Cardiac septum (tissue), 1 donor: ENCODE measurements at regions of chr13 and their contacts with region 1.

Region 1: DNA sequence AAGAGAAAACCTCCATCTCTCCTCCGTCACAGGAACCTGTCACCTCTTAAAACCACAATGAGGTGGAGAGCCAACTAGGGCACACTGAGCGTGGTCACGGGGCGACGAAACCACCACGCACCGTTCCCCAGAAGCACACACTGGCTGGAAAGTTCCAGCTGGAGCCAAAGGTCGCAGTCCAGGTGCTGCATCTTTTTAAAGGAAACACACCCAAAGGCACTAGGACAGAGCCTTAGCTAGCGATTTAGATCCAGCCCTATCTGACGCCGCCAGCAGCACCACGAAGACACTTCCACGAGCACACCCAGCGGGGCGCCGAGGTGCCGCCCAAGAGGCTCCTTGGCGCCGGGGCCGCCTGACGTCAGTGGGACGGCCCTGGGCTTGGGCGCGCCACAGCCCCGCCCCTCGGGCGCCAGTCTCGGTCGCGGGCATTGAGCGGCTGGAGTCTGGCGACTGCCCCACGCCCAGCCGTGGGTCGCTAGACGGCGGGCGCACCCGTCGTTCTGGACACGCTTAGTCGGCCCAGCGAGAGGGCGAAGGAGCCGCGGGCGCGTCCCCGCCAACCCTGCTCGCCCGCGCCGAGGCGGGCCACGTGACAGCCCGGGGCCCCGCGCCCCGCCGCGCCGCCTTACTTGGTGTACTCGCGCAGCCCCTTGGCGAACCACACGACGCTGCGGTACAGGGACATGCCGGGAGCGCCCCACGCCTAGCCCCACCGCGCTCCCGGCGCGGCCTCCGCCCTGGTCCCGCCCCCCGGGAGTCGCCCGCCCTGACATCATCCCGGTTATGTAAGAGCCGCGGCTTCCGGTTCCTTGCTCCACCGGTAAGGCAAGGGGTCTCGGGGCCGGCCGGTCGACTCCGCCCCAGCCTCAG is at the start of gene DHRS12:
- DNase-seq: peak; percentile 98
- total RNA-seq, gene DHRS12: 9.8 TPM

Region 2: DNA sequence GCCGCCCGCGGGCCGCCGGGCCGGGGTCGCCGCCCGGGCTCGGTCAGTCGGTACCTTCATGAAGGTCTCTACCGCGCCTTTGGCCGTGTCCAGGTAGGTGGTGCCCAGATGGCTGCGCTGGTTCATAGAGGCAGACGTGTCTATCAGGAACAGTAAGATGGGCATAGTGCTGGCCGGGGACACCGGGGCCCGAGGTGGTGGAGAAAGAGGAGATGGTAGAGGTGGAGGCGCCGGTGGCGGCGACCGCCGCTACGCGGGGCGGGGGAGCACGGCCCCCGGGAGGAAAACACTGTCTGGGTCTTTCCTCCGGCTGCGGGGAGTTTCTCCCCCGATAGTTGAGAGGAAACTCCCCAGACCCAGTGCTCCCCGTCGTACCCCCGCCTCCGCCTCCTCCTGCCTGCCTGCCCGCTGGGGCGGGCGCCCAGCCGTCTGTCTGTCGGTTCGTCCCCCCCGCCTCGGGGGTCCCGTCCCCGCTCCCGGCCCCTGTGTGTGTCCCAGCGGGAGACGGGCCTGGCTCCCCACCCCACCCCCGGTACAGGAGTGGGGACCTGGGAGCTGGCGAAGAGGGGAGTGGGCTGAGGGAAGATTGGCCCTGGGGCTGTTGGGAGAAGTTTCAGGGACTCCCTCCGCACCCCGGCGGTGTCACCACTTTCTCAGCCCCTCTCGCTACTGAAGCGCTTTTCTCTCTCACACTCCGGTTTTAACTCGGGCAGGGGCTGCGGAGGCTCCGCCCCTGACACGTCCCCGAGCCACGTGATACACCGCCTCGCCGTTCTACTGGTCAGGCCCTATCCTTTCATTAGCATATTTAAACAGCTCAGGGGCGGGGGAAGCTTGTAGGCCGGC is 351.1 kb before region 1 on chr13 and contains the start of gene INTS6:
- intact Hi-C with region 1: loop called (anchors 5 kb)
- DNase-seq: peak; percentile 100
- total RNA-seq, gene INTS6: 32.9 TPM

Region 3: DNA sequence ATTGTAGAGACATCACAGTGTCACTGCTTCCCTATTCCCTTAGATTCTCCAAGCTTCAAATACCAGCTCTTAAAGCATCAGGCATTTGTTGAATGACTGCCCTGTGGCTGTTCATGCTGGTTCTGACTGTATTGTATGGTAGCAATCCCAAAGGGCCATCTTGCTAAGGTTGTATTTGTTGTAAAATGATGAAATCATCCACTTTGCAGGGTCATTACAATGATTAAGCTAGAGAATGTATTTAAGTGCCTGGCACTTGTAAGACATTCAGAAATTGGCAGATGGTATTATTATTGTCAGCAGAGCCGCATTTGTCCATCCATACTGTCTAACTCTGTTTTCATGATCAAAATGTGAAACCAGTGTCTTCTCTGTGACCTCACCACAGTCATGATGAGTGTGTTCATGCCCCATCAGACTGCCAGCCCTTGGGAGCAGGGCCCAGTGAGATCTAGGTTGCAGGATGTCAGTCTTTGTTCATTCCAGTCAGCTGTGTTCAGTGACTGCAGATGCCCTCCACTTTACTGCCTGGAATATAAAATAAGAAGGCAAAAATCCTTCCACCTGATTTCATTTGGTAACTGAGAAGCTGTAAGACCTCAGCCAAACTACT is 85.8 kb before region 1 on chr13:
- intact Hi-C with region 1: no loop called
- DNase-seq: no peak

Region 4: DNA sequence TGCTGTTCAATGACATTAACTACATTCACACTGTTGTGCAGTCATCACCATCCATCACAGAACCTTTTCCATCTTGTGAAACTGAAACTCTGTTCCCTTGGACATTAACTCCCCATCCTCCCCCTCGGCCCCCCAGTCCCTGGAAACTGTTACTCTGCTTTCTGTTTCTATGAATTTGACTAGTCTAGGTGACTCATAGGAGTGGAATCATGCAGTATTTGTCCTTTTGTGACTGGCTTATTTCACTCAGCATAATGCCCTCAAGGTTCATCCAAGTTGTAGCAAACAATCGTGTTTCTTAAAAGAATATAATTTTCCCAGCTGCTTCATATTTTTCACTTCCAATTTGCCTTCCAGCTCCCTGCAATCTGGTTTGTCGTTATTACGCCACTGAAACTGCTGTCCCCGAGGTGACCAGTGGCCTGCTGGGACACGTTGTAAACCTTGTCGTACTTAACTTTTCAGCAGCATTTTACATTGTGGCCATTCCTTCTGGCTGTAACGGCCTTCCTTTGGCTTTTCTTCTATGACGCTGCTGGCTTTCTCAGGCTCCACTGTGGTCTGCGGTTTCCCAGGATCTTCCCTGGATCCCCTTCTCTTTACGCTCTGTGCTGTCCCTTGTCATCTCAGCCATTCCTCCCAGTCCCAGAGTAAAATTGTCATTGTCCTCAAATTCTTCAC is 73.7 kb before region 1 on chr13:
- intact Hi-C with region 1: loop called (anchors 5 kb)
- DNase-seq: no peak

Region 5: DNA sequence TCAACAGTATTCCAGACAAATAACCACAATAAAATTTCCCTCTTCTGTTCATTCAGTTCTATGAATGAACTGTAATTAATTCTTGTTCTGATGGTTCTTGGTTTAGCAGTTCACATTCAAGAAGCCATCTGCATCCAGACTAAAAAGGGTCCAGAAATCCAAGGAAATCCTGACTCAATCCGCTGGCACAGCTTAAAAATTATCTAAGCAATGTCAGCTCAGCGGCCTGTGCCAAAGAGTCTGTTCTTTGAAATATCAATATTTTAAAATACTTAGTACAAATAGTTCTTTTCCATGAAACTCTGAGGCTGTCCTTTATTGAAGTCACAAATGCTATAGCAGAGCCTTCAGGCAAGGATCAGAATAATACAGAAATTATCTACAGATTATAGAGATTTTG is 56.9 kb before region 1 on chr13:
- intact Hi-C with region 1: no loop called
- DNase-seq: no peak

Region 6: DNA sequence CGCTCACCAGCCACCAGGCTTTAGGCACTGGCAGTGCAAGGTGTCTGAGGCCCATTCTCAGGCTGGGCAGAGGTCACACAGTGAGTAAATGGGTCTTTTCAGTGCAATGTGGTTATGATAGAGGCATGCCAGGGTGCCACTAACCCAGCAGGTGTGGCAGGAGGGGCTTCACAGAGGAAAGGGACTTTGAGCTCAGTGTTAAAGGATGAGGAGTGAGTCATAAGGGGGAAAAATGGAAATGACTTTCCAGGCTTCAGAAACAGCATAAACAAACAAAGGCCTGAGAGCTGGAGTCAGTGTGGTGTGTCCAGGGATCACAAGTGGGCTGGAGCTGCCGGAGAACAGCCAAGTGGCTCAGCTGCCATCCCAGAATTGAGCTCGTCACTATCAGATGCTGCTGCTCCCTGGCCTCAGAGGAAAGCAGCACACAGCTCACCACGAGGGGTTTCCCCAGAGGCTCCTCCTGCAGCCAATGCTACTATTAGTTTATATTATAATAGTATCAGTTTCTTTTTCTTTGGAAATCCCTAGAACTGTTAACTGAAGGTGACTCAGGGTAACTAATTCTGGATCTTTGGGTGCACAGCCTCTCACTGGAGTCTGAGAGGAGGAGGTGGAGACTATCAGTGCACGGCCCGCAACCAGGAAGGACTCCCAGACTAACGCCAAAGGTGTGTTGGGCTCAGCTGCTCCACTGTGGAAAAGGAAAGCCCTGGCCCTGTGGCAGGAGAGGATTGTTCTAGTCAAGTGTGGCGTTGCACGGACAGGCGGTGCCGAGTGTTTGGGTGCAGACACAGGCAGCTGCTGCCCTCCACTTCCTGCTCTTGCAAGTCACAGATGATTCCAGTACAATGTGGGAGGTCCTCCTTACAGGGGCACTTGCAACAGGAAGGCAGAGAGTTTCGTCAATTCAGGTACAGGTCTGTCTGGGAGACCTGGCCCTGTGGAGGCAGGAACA is 39.2 kb before region 1 on chr13:
- intact Hi-C with region 1: loop called (anchors 5 kb)
- DNase-seq: peak; percentile 84

Region 7: DNA sequence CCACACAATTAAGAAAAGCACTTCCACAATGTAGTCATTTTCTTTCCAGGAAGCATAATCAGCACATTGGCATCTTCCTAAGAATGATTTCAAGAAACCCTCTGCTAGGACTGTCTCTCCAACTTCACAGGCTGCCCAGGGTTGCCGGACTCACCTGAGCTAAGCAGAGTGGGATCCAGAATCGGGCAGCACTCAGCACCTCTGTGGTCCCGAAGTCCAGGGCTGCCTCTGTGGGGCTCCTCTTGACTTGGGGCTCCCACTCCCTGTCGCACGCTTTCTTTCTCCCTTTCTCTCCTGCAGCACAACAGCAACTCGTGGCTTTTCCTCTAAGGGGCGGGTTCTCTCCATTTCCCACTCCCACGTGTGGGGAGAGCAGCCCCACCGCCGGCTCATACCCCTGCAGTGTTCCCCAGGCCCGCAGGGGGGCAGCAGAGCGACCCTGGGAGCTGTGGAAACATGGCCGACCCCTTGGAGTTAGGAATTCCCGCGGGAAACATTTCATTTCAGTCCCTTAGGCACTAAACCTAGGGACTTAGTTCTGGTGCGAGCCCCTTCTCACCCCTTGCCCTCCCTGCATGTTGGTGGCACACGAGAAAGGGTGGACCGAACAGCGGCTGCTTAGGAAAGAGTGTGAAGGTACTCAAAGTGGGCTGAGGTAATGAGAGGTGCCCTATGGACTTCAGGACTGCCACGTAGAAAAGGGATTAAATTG is 41.4 kb after region 1 on chr13 and contains the start of gene TMEM272:
- intact Hi-C with region 1: no loop called
- DNase-seq: peak; percentile 82
- total RNA-seq, gene TMEM272: 1.7 TPM